ENCODE measurements at regions of chr1 and their contacts with region 1.

Region 1: DNA sequence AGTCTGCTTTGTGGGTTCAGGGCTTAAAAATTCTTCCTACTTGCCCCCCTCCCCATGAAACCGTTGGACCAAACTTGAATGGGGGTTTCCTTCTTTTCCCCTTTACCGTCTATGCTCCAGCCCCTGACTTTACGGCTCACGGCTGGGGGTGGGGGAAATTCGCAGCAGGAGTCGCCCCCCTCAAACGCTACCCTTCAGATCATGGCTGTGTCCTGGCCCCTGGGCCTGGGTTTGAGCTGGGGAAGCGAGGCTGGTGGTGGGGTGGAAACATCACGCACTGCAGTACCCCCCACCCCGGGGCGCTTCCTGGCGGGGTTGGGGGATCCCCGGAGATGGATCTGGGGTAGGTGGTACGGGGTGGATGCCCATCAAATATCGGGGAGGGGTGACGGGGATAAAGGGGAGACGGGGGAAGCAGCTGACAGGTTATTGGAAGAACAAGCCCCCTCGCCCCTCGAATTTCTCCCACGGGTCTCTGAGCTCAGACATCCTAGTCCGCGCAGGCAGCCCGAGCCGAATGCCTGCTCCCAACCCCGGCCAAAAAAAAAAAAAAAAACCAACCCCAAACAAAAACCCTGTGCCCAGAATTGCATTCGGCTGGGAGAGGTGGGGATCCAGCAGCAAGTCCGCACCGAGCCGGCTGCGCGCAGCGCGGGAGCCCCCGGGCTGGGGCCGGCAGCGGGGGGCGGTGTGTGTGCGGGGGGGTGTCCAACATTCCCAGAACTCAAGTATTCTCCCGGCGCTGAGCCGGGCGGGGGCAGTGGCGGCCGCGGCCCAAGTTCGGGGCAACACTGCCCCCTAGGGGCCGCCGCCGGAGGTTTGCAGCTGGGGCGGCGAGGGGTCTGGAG is 59.0 kb upstream of the ACOT11 start:
- DNase-seq: peak; percentile 92
- CTCF ChIP-seq: peak; percentile 90

Region 2: GRCh38 chr1:54121482-54122134 is 367.4 kb before region 1 on chr1:
- in situ Hi-C with region 1: loop called (anchors 25 kb)
- DNase-seq: peak; percentile 88
- CTCF ChIP-seq: peak; percentile 66

Region 3: GRCh38 chr1:54754045-54754444 is 265.0 kb after region 1 on chr1:
- in situ Hi-C with region 1: no loop called
- DNase-seq: no peak
- CTCF ChIP-seq: no peak